Mammary epithelial cell (primary cell): ENCODE measurements at regions of chr17 and their contacts with region 1.

Region 1: GRCh38 chr17:81294856-81295680 is at the start of gene SLC38A10:
- DNase-seq: peak; percentile 83
- H3K4me3 ChIP-seq: peak within 1 kb of the TSS; percentile 71 to 87 (median 71)
- H3K27ac ChIP-seq: peak within 1 kb of the TSS; percentile 45
- H3K4me1 ChIP-seq: peaks cover 11% of the 10 kb centered on the region
- H3K27me3 ChIP-seq: no peaks in the 10 kb centered on the region
- CTCF ChIP-seq: peak in 1 of 2 donors; percentile 5
- total RNA-seq, gene SLC38A10: 36.5 to 71.7 TPM

Region 2: GRCh38 chr17:81253358-81254131 is 41.5 kb before region 1 on chr17:
- CTCF ChIA-PET with region 1: no interaction called
- dilution Hi-C with region 1: no loop called
- in situ Hi-C with region 1: no loop called
- intact Hi-C with region 1: loop called (anchors 5 kb)
- DNase-seq: no peak
- H3K4me3 ChIP-seq: no peak overlapping the region
- H3K27ac ChIP-seq: no peak overlapping the region
- H3K4me1 ChIP-seq: no peaks in the 10 kb centered on the region
- H3K27me3 ChIP-seq: no peaks in the 10 kb centered on the region
- CTCF ChIP-seq: peak; percentile 61 to 66

Region 3: DNA sequence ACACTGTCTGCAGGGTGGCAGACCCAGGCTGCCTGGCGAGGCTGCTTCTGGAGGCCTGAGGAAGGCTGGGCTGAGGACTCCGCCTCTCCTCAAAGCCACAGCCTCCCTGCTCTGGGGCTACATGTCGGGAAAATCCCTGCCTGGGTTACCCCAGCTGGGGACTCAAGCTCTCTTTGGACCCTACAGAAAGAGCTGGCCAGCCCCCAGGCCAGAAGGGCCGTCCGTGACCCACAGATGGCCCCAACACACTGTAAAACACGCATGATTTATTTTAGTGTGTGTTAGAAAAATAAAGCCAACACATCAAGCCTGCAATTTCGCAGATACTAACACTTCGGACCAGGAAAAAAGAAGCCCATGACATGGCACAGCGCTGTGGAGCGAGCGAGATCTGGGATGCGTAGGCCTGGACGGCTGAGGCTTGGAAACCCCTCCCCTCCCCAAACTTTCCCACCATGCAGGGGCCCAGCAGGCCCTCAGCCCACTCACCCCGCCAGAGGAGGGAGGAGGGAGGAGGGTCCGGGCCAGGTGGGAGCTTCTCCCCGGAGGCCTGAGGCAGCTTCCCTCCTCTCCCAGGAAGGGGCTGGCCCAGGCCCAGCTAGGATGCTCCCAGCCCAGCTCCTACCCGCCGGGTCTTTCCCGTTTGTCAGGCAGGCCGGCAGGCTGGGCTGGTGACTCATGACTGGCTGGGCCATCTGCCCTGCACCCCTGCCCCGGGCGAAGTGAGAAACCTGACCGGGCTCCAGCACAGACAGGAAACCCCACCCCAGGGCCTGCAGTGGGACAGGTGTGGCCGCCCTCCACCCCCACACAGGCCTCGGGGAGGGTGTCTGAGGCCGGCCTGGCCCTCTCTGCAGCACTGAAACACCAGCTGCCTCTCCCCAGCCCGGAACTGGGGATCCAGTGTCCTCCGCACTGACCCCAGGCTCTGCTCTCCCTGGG is 34.2 kb after region 1 on chr17:
- CTCF ChIA-PET with region 1: no interaction called
- dilution Hi-C with region 1: no loop called
- in situ Hi-C with region 1: no loop called
- intact Hi-C with region 1: loop called (anchors 2 kb)
- DNase-seq: peak; percentile 98
- H3K4me3 ChIP-seq: peak overlapping the region in 2 of 3 experiments; percentile 28 to 30
- H3K27ac ChIP-seq: peak overlapping the region; percentile 62
- H3K4me1 ChIP-seq: peaks cover 32% of the 10 kb centered on the region
- H3K27me3 ChIP-seq: no peaks in the 10 kb centered on the region
- CTCF ChIP-seq: no peak

Region 4: DNA sequence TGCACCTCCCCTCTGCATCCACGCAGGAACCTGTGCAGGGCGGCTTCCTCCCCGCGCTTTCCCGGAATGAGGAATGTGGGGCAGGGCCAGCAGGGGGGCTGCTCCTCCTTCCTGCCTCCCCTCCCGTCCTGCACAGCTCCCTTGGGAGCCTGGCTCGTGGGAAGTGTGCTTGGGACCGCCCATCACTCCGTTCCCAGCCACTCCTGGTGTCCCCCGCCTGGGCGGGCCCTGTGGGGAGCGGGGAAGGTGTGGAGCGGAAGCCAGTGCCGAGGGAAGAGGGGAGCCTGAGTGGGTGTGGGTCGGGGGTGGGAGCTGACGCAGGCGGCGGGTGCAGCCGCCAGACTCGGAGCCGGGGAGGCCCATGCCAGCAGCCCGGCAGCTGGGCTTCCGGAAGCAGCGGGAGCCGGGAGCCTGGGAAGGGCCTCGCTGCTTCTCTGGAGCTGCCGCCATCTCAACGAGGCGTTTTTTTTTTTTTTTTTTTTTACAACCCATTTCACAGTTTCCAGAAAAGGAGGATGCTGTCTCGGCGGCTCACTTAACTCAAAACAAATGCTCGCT is 124.3 kb after region 1 on chr17:
- CTCF ChIA-PET with region 1: no interaction called
- dilution Hi-C with region 1: no loop called
- in situ Hi-C with region 1: no loop called
- intact Hi-C with region 1: no loop called
- DNase-seq: peak; percentile 52
- H3K4me3 ChIP-seq: peak overlapping the region in 1 of 3 experiments; percentile 31
- H3K27ac ChIP-seq: no peak overlapping the region
- H3K4me1 ChIP-seq: peaks cover 47% of the 10 kb centered on the region
- H3K27me3 ChIP-seq: no peaks in the 10 kb centered on the region
- CTCF ChIP-seq: no peak

Region 5: GRCh38 chr17:81558941-81559806 is 264.1 kb after region 1 on chr17:
- CTCF ChIA-PET with region 1: no interaction called
- dilution Hi-C with region 1: no loop called
- in situ Hi-C with region 1: no loop called
- intact Hi-C with region 1: no loop called
- DNase-seq: no peak
- H3K4me3 ChIP-seq: no peak overlapping the region
- H3K27ac ChIP-seq: no peak overlapping the region
- H3K4me1 ChIP-seq: peaks cover 7% of the 10 kb centered on the region
- H3K27me3 ChIP-seq: no peaks in the 10 kb centered on the region
- CTCF ChIP-seq: peak in 1 of 2 donors; percentile 23